Upper lobe of right lung (tissue), 1 donor: ENCODE measurements at regions of chr4 and their contacts with region 1.

Region 1: DNA sequence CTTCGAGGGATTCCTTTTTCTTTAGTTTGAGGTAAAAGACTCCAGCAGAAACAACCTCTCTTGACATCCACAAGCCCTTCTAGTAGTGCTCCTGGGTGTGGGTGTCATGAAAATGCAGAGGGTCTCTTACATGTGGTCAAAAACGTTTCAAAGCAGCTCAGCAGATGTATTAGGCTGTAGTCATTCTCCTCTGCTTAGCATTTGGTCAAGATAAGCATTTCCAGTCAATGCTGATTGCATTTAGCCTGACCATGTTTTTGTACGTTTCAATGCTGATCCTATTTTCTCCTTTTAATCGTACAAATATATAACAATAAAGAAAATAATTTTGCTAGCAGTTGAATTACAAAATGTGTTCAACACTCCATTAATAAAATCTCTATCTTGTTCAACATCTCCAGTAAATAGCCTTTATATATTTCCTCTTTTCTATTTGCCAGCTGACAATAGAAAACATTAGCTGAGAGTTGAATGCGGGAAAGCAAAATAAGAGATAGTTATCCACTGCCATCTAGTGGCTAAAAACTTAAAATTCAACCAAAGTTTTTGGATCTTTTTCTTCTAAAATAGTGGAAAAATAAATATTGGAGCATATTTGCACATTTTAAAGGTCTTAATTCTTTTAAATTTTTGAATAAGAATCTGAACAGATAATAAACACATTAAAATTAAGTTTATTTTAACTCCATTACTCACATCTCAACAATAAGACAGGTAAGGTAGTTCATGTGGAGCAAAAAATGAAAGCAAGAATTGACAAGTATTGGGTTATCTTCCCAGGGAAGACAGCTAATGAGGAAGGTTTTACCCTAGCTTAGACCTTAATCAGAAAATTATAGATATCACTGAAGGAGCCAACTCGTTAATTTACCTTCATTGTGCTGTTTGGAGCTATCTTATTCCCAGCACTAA is 15.2 kb upstream of the PACRGL start:
- DNase-seq: no peak
- ATAC-seq: peak; percentile 47
- H3K4me3 ChIP-seq: no peak overlapping the region
- H3K27ac ChIP-seq: no peak overlapping the region
- H3K4me1 ChIP-seq: peaks cover 7% of the 10 kb centered on the region
- H3K27me3 ChIP-seq: no peaks in the 10 kb centered on the region
- CTCF ChIP-seq: peak; percentile 68

Region 2: GRCh38 chr4:20119141-20119540 is 566.0 kb before region 1 on chr4:
- intact Hi-C with region 1: no loop called
- DNase-seq: no peak
- ATAC-seq: no peak
- H3K4me3 ChIP-seq: no peak overlapping the region
- H3K27ac ChIP-seq: no peak overlapping the region
- H3K4me1 ChIP-seq: no peaks in the 10 kb centered on the region
- H3K27me3 ChIP-seq: no peaks in the 10 kb centered on the region
- CTCF ChIP-seq: no peak

Region 3: DNA sequence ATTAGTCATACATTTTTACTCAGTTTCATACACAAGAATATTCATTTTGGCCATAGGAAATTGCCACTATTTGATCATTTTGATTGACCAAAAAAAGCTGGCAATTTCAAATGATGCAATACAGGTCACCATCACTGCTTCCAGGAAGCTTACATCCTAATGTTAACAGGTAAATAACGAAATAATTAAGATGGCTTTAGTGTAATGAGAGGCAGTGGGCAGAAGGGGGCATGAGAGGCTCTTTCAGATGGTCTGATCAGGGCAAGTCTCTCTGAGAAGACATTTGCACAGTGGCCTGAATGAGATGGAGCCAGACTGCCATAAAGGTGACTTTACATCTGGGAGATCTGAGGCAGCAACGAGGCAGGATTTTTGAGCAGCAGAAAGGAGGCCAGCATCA is 262.7 kb before region 1 on chr4:
- intact Hi-C with region 1: loop called (anchors 10 kb)
- DNase-seq: no peak
- ATAC-seq: peak; percentile 90
- H3K4me3 ChIP-seq: no peak overlapping the region
- H3K27ac ChIP-seq: no peak overlapping the region
- H3K4me1 ChIP-seq: peaks cover 7% of the 10 kb centered on the region
- H3K27me3 ChIP-seq: no peaks in the 10 kb centered on the region
- CTCF ChIP-seq: peak; percentile 56